ENCODE measurements at regions of chr16 and their contacts with region 1.

Region 1: DNA sequence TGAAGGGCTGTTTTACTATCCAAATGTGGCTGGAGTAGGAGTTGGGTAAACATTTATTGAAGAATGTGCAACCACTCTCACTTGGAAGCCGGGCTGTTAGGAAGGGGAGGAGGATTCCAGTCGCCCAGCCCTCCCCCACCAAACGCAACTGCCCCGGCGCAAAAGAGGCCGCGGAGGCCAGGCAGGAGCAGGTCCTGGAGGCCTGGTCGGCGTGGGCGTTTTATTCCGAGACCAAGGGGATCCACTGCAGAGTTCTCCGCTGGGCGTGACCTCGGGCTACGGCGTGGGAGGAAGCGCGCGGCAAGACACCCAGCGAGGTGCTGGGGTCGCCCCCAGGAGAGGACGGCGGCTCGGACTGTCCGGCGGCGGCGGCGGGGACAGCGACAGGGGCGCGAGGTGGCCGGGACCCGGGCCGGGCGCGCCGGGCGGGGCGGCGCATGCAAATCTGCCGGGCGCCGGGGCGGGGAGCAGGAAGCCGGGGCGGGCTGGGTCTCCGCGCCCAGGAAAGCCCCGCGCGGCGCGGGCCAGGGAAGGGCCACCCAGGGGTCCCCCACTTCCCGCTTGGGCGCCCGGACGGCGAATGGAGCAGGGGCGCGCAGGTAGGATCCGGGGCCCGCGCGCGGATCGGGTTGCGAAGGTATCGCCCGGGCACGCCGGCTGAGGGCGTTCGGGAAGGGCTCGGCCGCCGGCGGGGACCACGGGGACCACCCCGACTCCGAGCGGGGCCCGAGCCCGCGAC is at the start of gene IL4R:
- DNase-seq: peak; percentile 90 to 94 (median 90)
- ATAC-seq: peak; percentile 33 to 59
- H3K4me3 ChIP-seq: peak within 1 kb of the TSS; percentile 87
- H3K27ac ChIP-seq: peak within 1 kb of the TSS; percentile 77
- H3K4me1 ChIP-seq: peaks cover 16% of the 10 kb centered on the region
- H3K27me3 ChIP-seq: no peaks in the 10 kb centered on the region
- total RNA-seq, gene IL4R: 19.9 to 51.0 (median 25.7) TPM

Region 2: GRCh38 chr16:27164352-27164751 is 149.2 kb before region 1 on chr16:
- intact Hi-C with region 1: no loop called
- DNase-seq: peak; percentile 47 to 87 (median 73)
- ATAC-seq: peak; percentile 78 to 92
- H3K4me3 ChIP-seq: no peak overlapping the region
- H3K27ac ChIP-seq: no peak overlapping the region
- H3K4me1 ChIP-seq: no peaks in the 10 kb centered on the region
- H3K27me3 ChIP-seq: no peaks in the 10 kb centered on the region

Region 3: GRCh38 chr16:27203429-27204231 is 110.0 kb before region 1 on chr16 and contains the start of gene KDM8:
- intact Hi-C with region 1: no loop called
- DNase-seq: peak; percentile 99 to 100 (median 100)
- ATAC-seq: peak; percentile 97 to 98
- H3K4me3 ChIP-seq: peak within 1 kb of the TSS; percentile 63
- H3K27ac ChIP-seq: peak within 1 kb of the TSS; percentile 96
- H3K4me1 ChIP-seq: peaks cover 5% of the 10 kb centered on the region
- H3K27me3 ChIP-seq: no peaks in the 10 kb centered on the region
- total RNA-seq, gene KDM8: 3.2 to 6.1 (median 5.1) TPM

Region 4: GRCh38 chr16:27253526-27253930 is 60.1 kb before region 1 on chr16:
- intact Hi-C with region 1: loop called in 1 of 4 experiments (anchors 10 kb)
- DNase-seq: no peak
- ATAC-seq: peak; percentile 72 to 84
- H3K4me3 ChIP-seq: no peak overlapping the region
- H3K27ac ChIP-seq: peak overlapping the region; percentile 3
- H3K4me1 ChIP-seq: no peaks in the 10 kb centered on the region
- H3K27me3 ChIP-seq: no peaks in the 10 kb centered on the region

Measured in right cardiac atrium (tissue), 5 donors.